ENCODE measurements at regions of chr19 and their contacts with region 1.

Region 1: GRCh38 chr19:17496337-17496997 is 15.0 kb upstream of the PGLS start:
- DNase-seq: peak; percentile 86
- H3K4me3 Mint-ChIP-seq: no peak overlapping the region
- H3K27ac Mint-ChIP-seq: no peak overlapping the region
- H3K4me1 Mint-ChIP-seq: peaks cover 15% of the 10 kb centered on the region
- H3K27me3 Mint-ChIP-seq: no peaks in the 10 kb centered on the region
- CTCF ChIP-seq: peak; percentile 90

Region 2: GRCh38 chr19:17579661-17580244 is 83.3 kb after region 1 on chr19:
- CTCF ChIA-PET with region 1: interaction called, 5 read pairs
- POLR2A ChIA-PET with region 1: no interaction called
- intact Hi-C with region 1: loop called (anchors 2 kb)
- DNase-seq: peak; percentile 94
- H3K4me3 Mint-ChIP-seq: no peak overlapping the region
- H3K27ac Mint-ChIP-seq: no peak overlapping the region
- H3K4me1 Mint-ChIP-seq: peaks cover 11% of the 10 kb centered on the region
- H3K27me3 Mint-ChIP-seq: no peaks in the 10 kb centered on the region
- CTCF ChIP-seq: no peak

Region 3: GRCh38 chr19:17648097-17648660 is 151.7 kb after region 1 on chr19:
- CTCF ChIA-PET with region 1: no interaction called
- POLR2A ChIA-PET with region 1: no interaction called
- intact Hi-C with region 1: no loop called
- DNase-seq: no peak
- H3K4me3 Mint-ChIP-seq: no peak overlapping the region
- H3K27ac Mint-ChIP-seq: no peak overlapping the region
- H3K4me1 Mint-ChIP-seq: no peaks in the 10 kb centered on the region
- H3K27me3 Mint-ChIP-seq: peaks cover 19% of the 10 kb centered on the region
- CTCF ChIP-seq: no peak

Measured in MCF 10A (cell line).